ENCODE measurements at regions of chr6 and their contacts with region 1.

Region 1: DNA sequence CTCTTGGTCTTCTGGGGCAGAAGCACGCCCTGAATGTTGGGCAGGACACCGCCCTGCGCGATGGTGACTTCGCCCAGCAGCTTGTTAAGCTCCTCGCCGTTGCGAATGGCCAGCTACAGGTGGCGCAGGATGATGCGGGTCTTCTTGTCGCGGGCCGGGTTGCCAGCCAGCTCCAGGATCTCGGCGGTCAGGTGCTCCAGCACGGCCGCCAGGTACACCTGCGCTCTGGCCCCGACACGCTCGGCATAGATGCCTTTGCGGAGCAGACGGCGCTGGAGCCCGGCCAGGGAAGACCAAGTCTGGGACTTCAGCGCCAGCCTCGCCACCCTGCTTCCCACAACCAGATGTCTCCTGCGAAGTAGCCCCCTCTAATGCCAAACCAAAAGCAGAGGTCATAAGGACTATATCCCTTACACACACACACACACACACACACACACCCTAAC is 8.0 kb upstream of the SLC17A3 start:
- DNase-seq: peak in 3 of 5 donors; percentile 45 to 73 (median 63)
- H3K4me3 ChIP-seq: peak overlapping the region in 1 of 2 donors; percentile 44
- H3K4me3 Mint-ChIP-seq: peak overlapping the region in 5 of 8 donors; percentile 86 to 94 (median 90)
- H3K27ac ChIP-seq: peak overlapping the region; percentile 31
- H3K27ac Mint-ChIP-seq: peak overlapping the region in 5 of 7 donors; percentile 63 to 97 (median 91)
- H3K4me1 ChIP-seq: no peaks in the 10 kb centered on the region
- H3K4me1 Mint-ChIP-seq: peaks cover under 1 to 8% (median 4%) of the 10 kb centered on the region in 4 donors
- H3K27me3 ChIP-seq: no peaks in the 10 kb centered on the region
- H3K27me3 Mint-ChIP-seq: peaks cover 0 to 2% of the 10 kb centered on the region in 2 donors

Region 2: GRCh38 chr6:25866011-25866410 is 16.1 kb before region 1 on chr6:
- CTCF ChIA-PET with region 1: interaction called, 15 read pairs
- POLR2A ChIA-PET with region 1: interaction called, 14 read pairs
- intact Hi-C with region 1: no loop called
- DNase-seq: peak; percentile 75 to 84 (median 79)
- H3K4me3 ChIP-seq: no peak overlapping the region
- H3K4me3 Mint-ChIP-seq: peak overlapping the region in 7 of 8 donors; percentile 29 to 76 (median 72)
- H3K27ac ChIP-seq: peak overlapping the region; percentile 36
- H3K27ac Mint-ChIP-seq: peak overlapping the region; percentile 89 to 98 (median 96)
- H3K4me1 ChIP-seq: peaks cover 26% of the 10 kb centered on the region
- H3K4me1 Mint-ChIP-seq: peaks cover 28 to 39% (median 36%) of the 10 kb centered on the region in 4 donors
- H3K27me3 ChIP-seq: no peaks in the 10 kb centered on the region
- H3K27me3 Mint-ChIP-seq: peaks cover 4% of the 10 kb centered on the region in 2 donors

Region 3: GRCh38 chr6:26045065-26045927 is 163.2 kb after region 1 on chr6:
- CTCF ChIA-PET with region 1: no interaction called
- POLR2A ChIA-PET with region 1: no interaction called
- intact Hi-C with region 1: no loop called
- DNase-seq: peak; percentile 88 to 91 (median 90)
- H3K4me3 ChIP-seq: peak overlapping the region; percentile 72 to 74
- H3K4me3 Mint-ChIP-seq: peak overlapping the region; percentile 88 to 98 (median 94)
- H3K27ac ChIP-seq: peak overlapping the region; percentile 76
- H3K27ac Mint-ChIP-seq: peak overlapping the region; percentile 93 to 99 (median 98)
- H3K4me1 ChIP-seq: peaks cover 14% of the 10 kb centered on the region
- H3K4me1 Mint-ChIP-seq: peaks cover 12 to 28% (median 20%) of the 10 kb centered on the region in 4 donors
- H3K27me3 ChIP-seq: no peaks in the 10 kb centered on the region
- H3K27me3 Mint-ChIP-seq: no peaks in the 10 kb centered on the region